ENCODE measurements at regions of chr20 and their contacts with region 1.

Region 1: DNA sequence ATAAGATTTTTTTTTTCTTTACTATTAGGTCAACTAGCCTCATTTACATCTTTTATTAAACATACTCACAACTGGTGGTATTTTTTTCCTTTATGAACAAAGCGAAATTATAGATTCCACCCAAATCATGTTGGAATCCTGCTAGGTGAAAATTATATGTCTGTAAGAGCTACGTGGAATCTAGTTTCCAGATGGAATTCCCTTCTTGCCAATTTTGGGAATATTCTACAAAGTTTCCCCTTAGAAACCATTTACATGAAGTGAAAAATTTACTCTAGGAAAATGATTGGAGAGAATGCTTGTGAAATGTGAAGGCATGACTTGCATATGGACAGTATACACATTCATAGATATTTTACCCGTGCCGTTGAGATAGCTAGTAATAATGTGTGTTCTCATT is 1111.3 kb downstream of the KIF16B start:
- DNase-seq: no peak
- ATAC-seq: no peak
- H3K4me3 ChIP-seq: no peak overlapping the region
- H3K27ac ChIP-seq: no peak overlapping the region
- H3K4me1 ChIP-seq: no peaks in the 10 kb centered on the region
- H3K27me3 ChIP-seq: no peaks in the 10 kb centered on the region
- CTCF ChIP-seq: no peak

Region 2: GRCh38 chr20:14127514-14128223 is 1334.3 kb before region 1 on chr20:
- intact Hi-C with region 1: loop called in 1 of 10 experiments (anchors 5 kb)
- DNase-seq: no peak
- ATAC-seq: no peak
- H3K4me3 ChIP-seq: no peak overlapping the region
- H3K27ac ChIP-seq: no peak overlapping the region
- H3K4me1 ChIP-seq: no peaks in the 10 kb centered on the region
- H3K27me3 ChIP-seq: no peaks in the 10 kb centered on the region
- CTCF ChIP-seq: no peak

Region 3: GRCh38 chr20:14612391-14612790 is 849.5 kb before region 1 on chr20:
- intact Hi-C with region 1: no loop called
- DNase-seq: no peak
- ATAC-seq: no peak
- H3K4me3 ChIP-seq: no peak overlapping the region
- H3K27ac ChIP-seq: no peak overlapping the region
- H3K4me1 ChIP-seq: no peaks in the 10 kb centered on the region
- H3K27me3 ChIP-seq: no peaks in the 10 kb centered on the region
- CTCF ChIP-seq: no peak

Region 4: DNA sequence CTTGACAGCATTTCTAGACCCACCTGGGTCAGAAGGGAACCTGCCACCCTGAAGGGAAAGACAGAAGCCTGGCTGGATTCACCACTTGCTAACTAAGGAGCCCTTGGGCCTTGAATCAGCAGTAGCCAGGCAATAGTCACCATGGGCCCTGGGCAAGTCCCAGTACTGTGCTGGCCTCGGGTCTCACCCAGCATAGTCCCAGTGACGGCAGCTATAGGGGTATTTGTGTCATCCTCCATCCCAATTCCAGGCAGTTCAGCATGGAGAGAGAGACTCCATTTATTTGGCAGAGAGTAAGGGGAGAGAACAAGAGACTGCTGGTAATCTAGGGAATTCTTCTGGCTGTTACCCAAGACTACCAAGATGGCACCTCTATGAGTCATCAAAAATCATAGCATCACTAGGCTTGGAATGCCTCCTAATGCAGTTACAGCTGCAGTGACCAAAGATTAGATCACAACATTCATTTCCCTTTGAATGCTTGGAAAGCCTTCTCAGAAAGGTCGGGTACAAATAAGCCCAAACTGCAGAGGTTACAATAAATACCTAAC is 464.2 kb before region 1 on chr20:
- intact Hi-C with region 1: loop called in 1 of 10 experiments (anchors 10 kb)
- DNase-seq: no peak
- ATAC-seq: no peak
- H3K4me3 ChIP-seq: no peak overlapping the region
- H3K27ac ChIP-seq: no peak overlapping the region
- H3K4me1 ChIP-seq: no peaks in the 10 kb centered on the region
- H3K27me3 ChIP-seq: no peaks in the 10 kb centered on the region
- CTCF ChIP-seq: no peak

Region 5: DNA sequence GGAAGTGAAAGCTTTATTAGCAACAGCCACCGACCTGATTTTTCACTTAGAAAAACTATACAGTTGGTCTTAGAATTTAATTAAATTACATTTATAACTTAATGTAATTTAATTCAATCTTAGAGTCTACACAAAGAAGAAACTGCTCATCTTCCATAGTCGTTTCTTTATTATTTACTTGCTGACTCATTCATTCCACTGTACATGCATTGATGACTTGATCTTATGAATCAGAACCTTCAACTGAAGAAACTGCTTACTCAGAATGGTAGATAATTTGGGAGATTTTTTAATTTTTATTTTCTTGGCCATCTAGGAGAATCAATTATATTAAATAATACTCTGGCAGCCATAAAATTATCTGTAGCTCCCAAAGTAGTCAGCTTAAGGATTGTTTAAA is 102.9 kb before region 1 on chr20:
- intact Hi-C with region 1: no loop called
- DNase-seq: no peak
- ATAC-seq: no peak
- H3K4me3 ChIP-seq: no peak overlapping the region
- H3K27ac ChIP-seq: no peak overlapping the region
- H3K4me1 ChIP-seq: no peaks in the 10 kb centered on the region
- H3K27me3 ChIP-seq: no peaks in the 10 kb centered on the region
- CTCF ChIP-seq: no peak

Measured in heart right ventricle (tissue), 16 donors.